Activated CD4-positive, alpha-beta T cell treated with anti-CD3 and anti-CD28 coated beads, Interleukin-2, amount 10 ng/mL, durations not matched to agents 24 days and 14 days (primary cell): ENCODE measurements at regions of chr2 and their contacts with region 1.

Region 1: GRCh38 chr2:11129598-11130449 is 25.4 kb upstream of the SLC66A3 start:
- DNase-seq: peak; percentile 96
- H3K4me3 Mint-ChIP-seq: peak overlapping the region; percentile 76
- H3K27ac Mint-ChIP-seq: peak overlapping the region; percentile 37
- H3K4me1 Mint-ChIP-seq: peaks cover 14% of the 10 kb centered on the region
- H3K27me3 Mint-ChIP-seq: peaks cover 6% of the 10 kb centered on the region

Region 2: DNA sequence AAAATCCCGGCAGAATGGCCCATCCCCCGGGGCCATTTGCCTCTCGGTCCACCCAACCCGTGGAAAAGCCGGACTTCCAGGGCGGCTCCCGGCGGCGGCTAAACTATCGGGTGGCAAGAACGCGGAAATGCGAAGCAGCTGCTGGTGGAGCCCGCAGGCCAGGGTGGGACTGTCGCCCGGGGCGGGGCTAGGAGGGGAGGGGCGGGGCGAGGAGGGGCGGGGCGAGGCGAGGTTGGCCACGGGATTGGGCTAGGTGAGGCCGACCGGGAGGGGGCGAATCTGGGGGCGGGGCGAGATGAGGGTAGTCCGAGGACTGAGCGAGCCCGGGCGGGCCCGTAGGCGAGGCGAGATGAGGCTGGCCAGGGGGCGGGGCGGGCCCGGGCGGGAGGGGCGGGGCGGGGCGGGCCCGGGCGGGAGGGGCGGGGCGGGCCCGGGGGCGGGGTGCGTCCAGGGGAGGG is 25.1 kb after region 1 on chr2:
- intact Hi-C with region 1: loop called (anchors 1 kb)
- DNase-seq: peak; percentile 98
- H3K4me3 Mint-ChIP-seq: peak overlapping the region; percentile 86
- H3K27ac Mint-ChIP-seq: peak overlapping the region; percentile 88
- H3K4me1 Mint-ChIP-seq: peaks cover 8% of the 10 kb centered on the region
- H3K27me3 Mint-ChIP-seq: peaks cover 8% of the 10 kb centered on the region

Region 3: DNA sequence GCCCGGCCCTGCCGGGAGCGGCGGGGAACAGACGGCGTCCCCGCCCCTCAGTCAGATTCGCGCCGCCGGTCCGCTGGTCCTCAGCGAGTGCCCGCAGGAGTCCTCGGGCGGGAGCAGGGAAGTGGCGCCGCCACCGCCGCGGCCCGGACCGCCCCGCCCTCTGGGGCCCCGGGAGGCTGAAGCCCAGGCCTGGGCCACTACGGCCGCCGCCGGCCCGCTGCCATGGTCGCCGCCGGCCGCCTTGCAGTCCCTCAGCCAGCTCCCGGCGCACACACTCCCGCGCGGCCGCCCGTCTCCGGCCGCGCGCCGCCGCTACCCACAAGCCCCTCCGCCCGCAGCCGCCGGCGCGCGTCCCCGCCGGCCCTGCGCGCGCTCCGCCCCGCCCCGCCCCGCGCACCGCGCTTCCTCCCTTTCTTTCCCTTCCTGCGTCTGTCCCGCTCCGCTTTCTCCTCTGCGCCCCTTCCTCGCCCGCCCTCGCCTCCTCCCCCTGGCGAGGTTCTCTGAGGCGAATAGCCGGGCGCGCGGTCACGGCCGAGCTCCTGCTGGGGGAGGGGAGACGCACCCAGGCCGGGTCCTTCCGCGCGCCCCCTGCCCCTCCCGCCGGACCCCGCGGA is 214.6 kb after region 1 on chr2 and contains the start of gene ROCK2:
- intact Hi-C with region 1: loop called (anchors 1 kb)
- DNase-seq: peak; percentile 92
- H3K4me3 Mint-ChIP-seq: peak within 1 kb of the TSS; percentile 99
- H3K27ac Mint-ChIP-seq: peak within 1 kb of the TSS; percentile 93
- H3K4me1 Mint-ChIP-seq: peaks cover 16% of the 10 kb centered on the region
- H3K27me3 Mint-ChIP-seq: peaks cover 13% of the 10 kb centered on the region
- total RNA-seq, gene ROCK2: 18.4 and 24.4 TPM in 2 replicates

Region 4: DNA sequence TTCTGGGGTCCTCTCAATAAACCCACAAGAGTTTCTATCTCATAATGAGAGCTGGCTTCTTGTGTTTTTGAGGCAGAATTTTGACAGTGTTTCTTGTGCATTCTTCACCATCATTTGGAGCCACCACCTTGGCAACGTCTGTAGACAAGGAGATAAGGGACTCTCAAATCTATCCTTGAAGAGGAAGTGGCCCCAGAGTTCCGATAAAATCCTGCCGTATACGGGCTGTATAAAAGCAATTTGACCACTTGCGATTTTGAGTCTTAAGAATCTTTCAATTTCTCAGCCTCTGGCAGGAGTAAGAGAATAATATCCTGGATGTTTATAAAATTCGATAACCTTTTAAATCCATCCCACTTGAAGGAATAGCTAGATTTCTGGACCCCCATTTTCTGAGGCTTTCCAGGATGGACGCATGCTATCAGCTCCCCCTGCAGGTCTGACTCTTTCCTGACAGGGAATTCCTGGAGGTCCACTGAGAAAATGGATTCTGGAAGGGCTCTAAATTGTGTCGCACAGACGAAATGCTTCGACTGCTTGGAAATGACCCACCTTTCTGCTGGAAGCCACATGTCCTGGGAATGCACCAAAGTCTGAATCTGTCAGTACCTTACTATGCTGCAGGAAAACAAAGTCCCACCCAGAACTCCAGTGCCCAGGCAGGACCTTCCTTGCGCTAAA is 282.1 kb after region 1 on chr2:
- intact Hi-C with region 1: loop called (anchors 10 kb)
- DNase-seq: no peak
- H3K4me3 Mint-ChIP-seq: no peak overlapping the region
- H3K27ac Mint-ChIP-seq: no peak overlapping the region
- H3K4me1 Mint-ChIP-seq: no peaks in the 10 kb centered on the region
- H3K27me3 Mint-ChIP-seq: peaks cover 6% of the 10 kb centered on the region

Region 5: GRCh38 chr2:11446733-11447248 is 317.0 kb after region 1 on chr2:
- intact Hi-C with region 1: loop called (anchors 1 kb)
- DNase-seq: peak; percentile 85
- H3K4me3 Mint-ChIP-seq: no peak overlapping the region
- H3K27ac Mint-ChIP-seq: no peak overlapping the region
- H3K4me1 Mint-ChIP-seq: no peaks in the 10 kb centered on the region
- H3K27me3 Mint-ChIP-seq: no peaks in the 10 kb centered on the region

Region 6: GRCh38 chr2:11465497-11466406 is 335.9 kb after region 1 on chr2 and contains the start of gene E2F6:
- intact Hi-C with region 1: loop called (anchors 5 kb)
- DNase-seq: peak; percentile 96
- H3K4me3 Mint-ChIP-seq: peak within 1 kb of the TSS; percentile 96
- H3K27ac Mint-ChIP-seq: peak within 1 kb of the TSS; percentile 94
- H3K4me1 Mint-ChIP-seq: peaks cover 30% of the 10 kb centered on the region
- H3K27me3 Mint-ChIP-seq: peaks cover 2% of the 10 kb centered on the region
- total RNA-seq, gene E2F6: 20.3 and 22.9 TPM in 2 replicates

Region 7: DNA sequence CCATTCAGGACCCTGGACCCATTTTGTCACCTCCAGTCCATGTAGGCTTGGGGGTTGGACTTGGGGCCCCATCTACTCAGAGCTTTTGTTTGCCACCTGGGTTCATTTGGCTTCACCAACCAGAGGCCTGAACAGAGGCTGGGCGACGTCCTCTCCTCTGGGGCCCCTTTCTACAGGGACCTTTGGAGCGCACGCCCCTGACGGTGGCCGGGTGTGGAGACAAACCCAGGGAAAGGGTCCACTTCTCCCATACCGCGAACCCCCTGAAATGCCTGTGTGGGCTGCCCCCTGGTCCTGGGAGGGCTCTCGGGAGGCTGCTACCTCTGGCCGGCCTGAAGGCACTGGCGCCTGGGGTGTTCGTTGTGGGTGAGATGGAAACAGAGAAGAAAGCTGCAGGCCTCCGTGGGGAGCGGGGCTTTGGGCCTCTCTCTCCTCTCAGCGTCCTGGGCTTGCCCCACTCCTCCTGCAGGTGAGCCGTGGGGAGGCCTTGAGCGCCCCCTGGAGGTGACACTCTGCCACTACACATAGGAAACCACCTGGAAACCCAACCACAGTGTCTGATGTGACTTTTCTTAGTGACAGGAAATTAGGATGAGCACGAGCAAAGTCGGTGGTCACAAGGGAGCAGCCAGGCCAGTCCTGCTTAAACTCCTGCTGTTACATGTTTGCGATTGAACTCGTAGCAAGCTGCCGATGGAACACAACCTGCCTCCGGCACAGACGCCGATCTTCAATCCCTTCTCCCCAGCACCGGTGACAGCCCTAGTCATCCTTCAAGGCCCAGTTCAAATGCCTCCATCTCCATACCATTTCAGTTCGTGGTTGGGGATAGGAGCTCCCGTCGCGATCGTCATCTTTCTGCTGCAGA is 552.1 kb after region 1 on chr2:
- intact Hi-C with region 1: loop called (anchors 2 kb)
- DNase-seq: peak; percentile 88
- H3K4me3 Mint-ChIP-seq: no peak overlapping the region
- H3K27ac Mint-ChIP-seq: no peak overlapping the region
- H3K4me1 Mint-ChIP-seq: peaks cover 5% of the 10 kb centered on the region
- H3K27me3 Mint-ChIP-seq: peaks cover 32% of the 10 kb centered on the region